ENCODE measurements at regions of chr17 and their contacts with region 1.

Region 1: DNA sequence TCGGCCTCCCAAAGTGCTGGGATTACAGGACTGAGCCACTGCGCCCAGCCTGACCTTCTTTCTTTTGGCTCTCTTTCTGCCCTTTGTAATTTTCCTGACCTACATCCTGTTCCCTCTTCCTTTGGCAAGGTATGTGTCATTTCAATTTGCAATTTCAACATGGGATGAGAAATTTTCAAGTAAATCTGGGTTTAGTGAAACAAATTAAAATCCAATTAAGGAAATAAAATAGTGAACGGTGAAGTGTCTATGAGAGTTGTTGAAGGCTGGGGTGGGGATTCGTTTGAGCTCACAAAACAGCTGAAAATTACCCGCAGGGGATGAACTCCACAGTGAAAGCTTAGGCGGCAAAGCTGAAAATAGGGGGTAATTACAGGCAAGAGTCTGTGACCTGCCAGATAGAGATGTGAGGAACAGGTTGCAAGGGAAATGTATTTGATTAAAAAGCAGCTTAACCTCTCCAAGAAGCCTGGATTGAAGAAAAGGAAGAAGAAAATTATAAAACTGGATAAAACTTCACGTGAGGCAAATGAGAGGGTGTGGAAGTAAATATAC is 277.7 kb downstream of the UTP18 start:
- DNase-seq: no peak
- H3K4me3 ChIP-seq: no peak overlapping the region
- H3K27ac ChIP-seq: no peak overlapping the region
- H3K4me1 ChIP-seq: no peaks in the 10 kb centered on the region
- H3K27me3 ChIP-seq: no peaks in the 10 kb centered on the region
- CTCF ChIP-seq: no peak
- EP300 ChIP-seq: no peak
- POLR2A ChIP-seq: no peak

Region 2: GRCh38 chr17:51298508-51299371 is 239.3 kb before region 1 on chr17:
- intact Hi-C with region 1: loop called in 1 of 4 experiments (anchors 10 kb)
- DNase-seq: no peak
- H3K4me3 ChIP-seq: no peak overlapping the region
- H3K27ac ChIP-seq: no peak overlapping the region
- H3K4me1 ChIP-seq: no peaks in the 10 kb centered on the region
- H3K27me3 ChIP-seq: no peaks in the 10 kb centered on the region
- CTCF ChIP-seq: peak in 2 of 3 donors; percentile 21 to 43
- EP300 ChIP-seq: no peak
- POLR2A ChIP-seq: no peak

Measured in ovary (tissue), 10 donors.